ENCODE measurements at regions of chr4 and their contacts with region 1.

Region 1: GRCh38 chr4:107037199-107037584 is 1.1 kb upstream of the DKK2 start:
- DNase-seq: peak; percentile 87
- H3K4me3 ChIP-seq: peak overlapping the region; percentile 82
- H3K27ac ChIP-seq: peak overlapping the region; percentile 84
- H3K4me1 ChIP-seq: peaks cover 6% of the 10 kb centered on the region
- H3K27me3 ChIP-seq: no peaks in the 10 kb centered on the region
- CTCF ChIP-seq: peak; percentile 95

Region 2: GRCh38 chr4:106384878-106385277 is 652.3 kb before region 1 on chr4:
- CTCF ChIA-PET with region 1: no interaction called
- POLR2A ChIA-PET with region 1: no interaction called
- intact Hi-C with region 1: no loop called
- DNase-seq: no peak
- H3K4me3 ChIP-seq: no peak overlapping the region
- H3K27ac ChIP-seq: no peak overlapping the region
- H3K4me1 ChIP-seq: no peaks in the 10 kb centered on the region
- H3K27me3 ChIP-seq: no peaks in the 10 kb centered on the region
- CTCF ChIP-seq: no peak

Region 3: DNA sequence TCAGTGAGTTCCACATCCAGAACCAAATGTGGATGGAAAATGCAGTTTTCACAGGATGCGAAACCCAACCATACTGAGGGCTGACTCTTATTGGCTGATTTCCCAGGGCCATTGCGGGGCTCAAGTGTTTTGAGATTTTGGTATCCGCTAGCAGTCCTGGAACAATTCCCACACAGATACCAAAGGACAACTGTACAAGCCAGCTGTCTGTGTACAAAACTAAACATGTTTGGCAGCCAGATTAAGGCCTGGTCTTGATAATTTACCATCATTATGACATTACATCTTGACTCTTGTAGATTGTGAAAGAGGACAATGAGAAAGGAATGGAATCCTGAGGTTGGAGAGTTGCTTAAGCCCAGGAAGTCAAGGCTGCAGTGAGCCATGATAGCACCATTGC is 123.0 kb before region 1 on chr4:
- CTCF ChIA-PET with region 1: no interaction called
- POLR2A ChIA-PET with region 1: no interaction called
- intact Hi-C with region 1: loop called (anchors 5 kb)
- DNase-seq: no peak
- H3K4me3 ChIP-seq: no peak overlapping the region
- H3K27ac ChIP-seq: no peak overlapping the region
- H3K4me1 ChIP-seq: no peaks in the 10 kb centered on the region
- H3K27me3 ChIP-seq: no peaks in the 10 kb centered on the region
- CTCF ChIP-seq: no peak

Region 4: GRCh38 chr4:107183155-107183774 is 146.1 kb after region 1 on chr4:
- CTCF ChIA-PET with region 1: interaction called, 18 read pairs
- POLR2A ChIA-PET with region 1: no interaction called
- intact Hi-C with region 1: loop called (anchors 2 kb)
- DNase-seq: peak; percentile 88
- H3K4me3 ChIP-seq: no peak overlapping the region
- H3K27ac ChIP-seq: peak overlapping the region; percentile 32
- H3K4me1 ChIP-seq: peaks cover 23% of the 10 kb centered on the region
- H3K27me3 ChIP-seq: no peaks in the 10 kb centered on the region
- CTCF ChIP-seq: peak; percentile 87

Region 5: DNA sequence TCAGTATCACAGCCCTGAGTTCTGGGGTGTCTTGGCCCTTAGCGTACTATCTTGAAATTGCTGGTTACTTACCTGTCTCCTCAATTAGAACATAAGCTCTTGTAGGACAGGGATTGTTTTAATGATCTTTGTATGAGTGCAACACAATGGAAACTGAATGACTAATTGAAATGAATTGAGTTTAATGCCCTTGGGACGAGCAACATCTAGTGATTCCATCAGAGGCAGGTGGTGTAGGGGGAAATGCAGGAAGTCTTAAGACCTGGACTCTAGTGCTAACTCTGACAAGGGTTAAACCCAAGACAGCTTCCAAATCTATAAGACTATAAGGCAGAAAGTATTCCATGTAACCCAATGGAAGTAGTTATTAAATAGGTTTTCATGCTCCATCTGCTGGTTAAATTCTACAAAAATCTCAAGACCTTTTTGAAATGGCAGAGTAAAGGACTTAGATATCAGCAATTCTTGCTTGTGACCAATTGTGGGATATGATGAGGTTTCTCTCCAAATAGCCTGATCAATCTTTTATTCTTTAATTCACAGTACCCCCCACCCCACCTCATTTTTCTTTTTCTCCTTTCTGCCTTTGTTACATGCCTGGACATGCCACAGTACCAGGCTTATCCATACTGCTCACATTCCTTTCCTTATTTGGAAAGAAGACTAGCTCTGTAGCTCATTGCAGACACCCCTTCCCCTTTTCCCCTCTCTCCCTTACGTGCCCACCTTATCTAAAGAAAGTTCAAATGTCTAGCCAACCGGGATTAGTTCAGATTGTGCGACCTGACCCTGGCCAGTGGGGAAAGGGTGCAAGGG is 342.1 kb after region 1 on chr4:
- CTCF ChIA-PET with region 1: interaction called, 8 read pairs
- POLR2A ChIA-PET with region 1: no interaction called
- intact Hi-C with region 1: loop called (anchors 5 kb)
- DNase-seq: peak; percentile 81
- H3K4me3 ChIP-seq: no peak overlapping the region
- H3K27ac ChIP-seq: peak overlapping the region; percentile 44
- H3K4me1 ChIP-seq: peaks cover 41% of the 10 kb centered on the region
- H3K27me3 ChIP-seq: no peaks in the 10 kb centered on the region
- CTCF ChIP-seq: peak; percentile 58

Region 6: DNA sequence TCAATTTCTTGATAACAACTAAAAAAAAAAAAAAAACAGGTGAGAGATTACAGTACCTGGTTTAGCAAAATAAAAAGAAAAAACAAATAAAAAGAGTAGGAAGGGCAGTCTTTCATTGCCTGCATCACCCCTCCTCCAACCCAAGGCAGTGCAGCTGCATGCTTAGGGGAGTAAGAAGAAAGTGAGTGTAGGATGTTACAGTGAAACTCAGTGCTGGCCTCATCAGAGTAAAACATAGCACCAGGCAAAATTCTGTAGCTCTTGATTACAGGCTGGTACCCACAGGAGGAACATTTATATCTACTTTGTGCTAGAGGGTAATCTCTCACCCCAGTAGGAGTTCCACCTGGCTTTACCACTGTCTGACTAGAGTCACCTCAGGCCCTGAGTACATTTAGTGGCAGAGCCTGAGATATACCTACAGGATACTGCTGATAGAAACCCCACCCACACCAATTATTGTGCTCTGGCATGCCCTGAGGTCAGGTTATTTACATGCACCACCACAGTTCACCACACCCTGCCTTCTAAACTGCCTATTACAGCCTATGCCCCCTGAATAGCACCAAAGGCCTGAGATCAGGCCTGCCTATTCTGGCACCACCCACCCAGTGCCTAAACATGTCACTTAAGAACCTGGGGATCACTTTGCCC is 441.3 kb after region 1 on chr4:
- CTCF ChIA-PET with region 1: no interaction called
- POLR2A ChIA-PET with region 1: no interaction called
- intact Hi-C with region 1: no loop called
- DNase-seq: no peak
- H3K4me3 ChIP-seq: no peak overlapping the region
- H3K27ac ChIP-seq: no peak overlapping the region
- H3K4me1 ChIP-seq: no peaks in the 10 kb centered on the region
- H3K27me3 ChIP-seq: no peaks in the 10 kb centered on the region
- CTCF ChIP-seq: no peak

Region 7: DNA sequence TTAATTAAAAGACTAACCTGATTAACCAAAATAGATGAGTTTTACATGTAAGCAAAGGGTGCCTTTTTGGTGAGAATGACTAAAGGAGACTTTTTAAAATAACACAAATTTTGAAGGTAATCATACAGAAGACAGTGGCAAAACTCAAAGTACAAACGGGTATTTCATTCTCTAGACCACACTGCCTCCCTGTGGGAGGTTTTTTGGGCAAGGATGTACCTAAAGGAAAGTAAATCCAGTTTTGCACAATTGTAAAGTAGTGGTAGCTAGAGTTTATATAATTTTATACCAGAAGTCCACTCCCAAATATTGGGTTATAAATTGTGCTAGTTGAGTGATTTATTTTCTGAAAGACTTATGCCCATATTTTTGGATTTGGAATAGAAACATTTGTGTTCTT is 481.9 kb after region 1 on chr4:
- CTCF ChIA-PET with region 1: no interaction called
- POLR2A ChIA-PET with region 1: no interaction called
- intact Hi-C with region 1: loop called (anchors 10 kb)
- DNase-seq: peak; percentile 83
- H3K4me3 ChIP-seq: no peak overlapping the region
- H3K27ac ChIP-seq: peak overlapping the region; percentile 46
- H3K4me1 ChIP-seq: peaks cover 16% of the 10 kb centered on the region
- H3K27me3 ChIP-seq: no peaks in the 10 kb centered on the region
- CTCF ChIP-seq: peak; percentile 80

Region 8: GRCh38 chr4:107736924-107737448 is 699.8 kb after region 1 on chr4:
- CTCF ChIA-PET with region 1: no interaction called
- POLR2A ChIA-PET with region 1: no interaction called
- intact Hi-C with region 1: loop called (anchors 10 kb)
- DNase-seq: peak; percentile 69
- H3K4me3 ChIP-seq: no peak overlapping the region
- H3K27ac ChIP-seq: no peak overlapping the region
- H3K4me1 ChIP-seq: peaks cover 37% of the 10 kb centered on the region
- H3K27me3 ChIP-seq: no peaks in the 10 kb centered on the region
- CTCF ChIP-seq: peak; percentile 88